WTC11 (cell line): ENCODE measurements at regions of chr11 and their contacts with region 1.

Region 1: DNA sequence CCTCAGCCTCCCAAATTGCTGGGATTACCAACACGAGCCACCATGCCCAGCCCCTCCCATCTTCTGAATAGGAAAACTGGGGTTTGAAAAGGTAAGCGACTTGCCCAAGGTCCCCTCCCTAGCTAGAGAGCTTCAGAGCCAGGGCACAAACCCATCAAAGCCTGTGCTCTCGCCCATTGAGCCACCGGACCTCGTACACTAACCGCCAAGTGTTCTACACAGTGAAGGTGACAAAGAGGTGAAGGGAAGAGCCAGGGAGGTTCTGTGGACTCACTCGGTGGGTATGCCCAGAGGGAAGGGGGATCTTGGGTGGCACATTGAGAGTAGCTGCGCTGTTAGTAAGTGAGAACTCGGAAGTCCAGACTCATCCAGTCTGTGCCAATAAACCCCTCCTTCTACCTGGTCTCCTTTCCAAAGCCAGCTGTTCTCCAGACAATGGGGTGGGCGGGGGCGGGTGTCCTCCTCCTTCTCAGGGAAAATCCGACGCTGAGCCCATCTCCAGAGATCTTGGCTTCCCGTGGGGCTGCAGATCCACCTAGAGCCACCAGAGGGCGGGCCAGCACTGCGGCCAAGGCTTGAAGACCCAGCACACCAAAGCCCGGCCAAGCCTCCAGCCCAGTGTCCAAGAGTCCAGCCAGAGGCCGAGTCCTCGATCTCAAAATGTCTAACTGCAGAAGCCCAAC is 3.2 kb upstream of the RTN4RL2 start:
- DNase-seq: peak; percentile 94
- ATAC-seq: peak; percentile 38
- H3K4me3 Mint-ChIP-seq: peak overlapping the region; percentile 80
- H3K27ac Mint-ChIP-seq: no peak overlapping the region
- H3K4me1 Mint-ChIP-seq: peaks cover 26% of the 10 kb centered on the region
- H3K27me3 Mint-ChIP-seq: peaks cover 62% of the 10 kb centered on the region
- CTCF ChIP-seq: peak; percentile 100

Region 2: GRCh38 chr11:57219021-57219627 is 238.0 kb before region 1 on chr11:
- CTCF ChIA-PET with region 1: no interaction called
- POLR2A ChIA-PET with region 1: no interaction called
- DNase-seq: no peak
- ATAC-seq: no peak
- H3K4me3 Mint-ChIP-seq: no peak overlapping the region
- H3K27ac Mint-ChIP-seq: no peak overlapping the region
- H3K4me1 Mint-ChIP-seq: peaks cover 2% of the 10 kb centered on the region; the same call in 1 of the 2 replicates
- H3K27me3 Mint-ChIP-seq: no peaks in the 10 kb centered on the region
- CTCF ChIP-seq: no peak

Region 3: DNA sequence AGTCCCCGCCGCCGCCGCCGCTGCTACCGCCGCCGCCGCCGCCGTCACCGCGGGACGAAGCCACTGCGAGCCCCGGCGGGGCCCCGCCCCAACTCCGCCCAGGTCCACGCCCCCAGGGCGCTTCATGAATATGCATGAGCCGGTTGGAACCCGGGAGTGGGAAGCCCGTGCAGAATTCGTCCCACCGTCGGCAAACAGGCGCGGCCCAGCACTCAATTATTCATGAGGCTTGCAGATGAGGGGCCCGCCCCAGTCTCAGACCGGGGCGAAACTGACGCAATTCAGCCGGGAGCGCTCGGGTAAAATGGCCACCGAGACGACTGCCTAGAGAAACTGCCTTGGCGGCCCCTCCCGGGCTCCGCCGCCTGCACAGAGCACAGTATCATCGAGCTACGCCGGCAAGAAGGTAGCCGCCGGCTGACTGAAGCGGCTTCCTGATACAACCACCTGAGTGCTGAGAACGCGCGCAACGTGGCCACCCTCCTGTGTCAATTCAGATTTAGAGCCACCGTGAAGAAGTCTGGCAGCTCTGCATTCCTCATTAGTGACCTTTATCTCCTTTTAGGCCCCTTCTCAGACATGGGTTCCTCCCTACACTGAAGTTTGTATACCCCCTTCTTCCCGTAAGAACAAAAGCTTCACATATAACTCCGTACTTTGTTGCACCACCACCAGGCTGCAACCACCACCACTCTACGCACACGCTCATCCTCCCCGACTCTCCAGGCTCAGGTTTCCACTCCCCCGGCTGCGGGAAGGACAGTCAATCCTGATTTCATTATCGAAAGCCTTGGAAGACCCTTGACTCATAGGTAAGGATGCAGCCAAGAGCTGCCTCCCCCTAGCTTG is 132.0 kb before region 1 on chr11 and contains the start of gene TNKS1BP1:
- CTCF ChIA-PET with region 1: interaction called, 16 read pairs
- POLR2A ChIA-PET with region 1: no interaction called
- DNase-seq: peak; percentile 97
- ATAC-seq: peak; percentile 86
- H3K4me3 Mint-ChIP-seq: peak within 1 kb of the TSS; percentile 88
- H3K27ac Mint-ChIP-seq: peak within 1 kb of the TSS; percentile 100
- H3K4me1 Mint-ChIP-seq: peaks cover 49% of the 10 kb centered on the region
- H3K27me3 Mint-ChIP-seq: no peaks in the 10 kb centered on the region
- CTCF ChIP-seq: no peak
- total RNA-seq, gene TNKS1BP1: 109 to 127 TPM (median 125 TPM) in 3 replicates

Region 4: GRCh38 chr11:57358543-57358961 is 98.5 kb before region 1 on chr11:
- CTCF ChIA-PET with region 1: interaction called, 15 read pairs
- POLR2A ChIA-PET with region 1: no interaction called
- DNase-seq: no peak
- ATAC-seq: no peak
- H3K4me3 Mint-ChIP-seq: no peak overlapping the region
- H3K27ac Mint-ChIP-seq: no peak overlapping the region
- H3K4me1 Mint-ChIP-seq: peaks cover 7% of the 10 kb centered on the region
- H3K27me3 Mint-ChIP-seq: peaks cover 11% of the 10 kb centered on the region; the same call in 1 of the 2 replicates
- CTCF ChIP-seq: no peak

Region 5: GRCh38 chr11:57426929-57427726 is 30.0 kb before region 1 on chr11 and contains the start of gene SLC43A3:
- CTCF ChIA-PET with region 1: interaction called, 36 read pairs
- POLR2A ChIA-PET with region 1: no interaction called
- DNase-seq: peak; percentile 73
- ATAC-seq: peak; percentile 92
- H3K4me3 Mint-ChIP-seq: peak within 1 kb of the TSS; percentile 72
- H3K27ac Mint-ChIP-seq: peak within 1 kb of the TSS; percentile 64; the same call in 1 of the 2 replicates
- H3K4me1 Mint-ChIP-seq: peaks cover 29% of the 10 kb centered on the region
- H3K27me3 Mint-ChIP-seq: peaks cover 38% of the 10 kb centered on the region
- CTCF ChIP-seq: no peak
- total RNA-seq, gene SLC43A3: 22.6 to 25.8 TPM (median 25.3 TPM) in 3 replicates

Region 6: DNA sequence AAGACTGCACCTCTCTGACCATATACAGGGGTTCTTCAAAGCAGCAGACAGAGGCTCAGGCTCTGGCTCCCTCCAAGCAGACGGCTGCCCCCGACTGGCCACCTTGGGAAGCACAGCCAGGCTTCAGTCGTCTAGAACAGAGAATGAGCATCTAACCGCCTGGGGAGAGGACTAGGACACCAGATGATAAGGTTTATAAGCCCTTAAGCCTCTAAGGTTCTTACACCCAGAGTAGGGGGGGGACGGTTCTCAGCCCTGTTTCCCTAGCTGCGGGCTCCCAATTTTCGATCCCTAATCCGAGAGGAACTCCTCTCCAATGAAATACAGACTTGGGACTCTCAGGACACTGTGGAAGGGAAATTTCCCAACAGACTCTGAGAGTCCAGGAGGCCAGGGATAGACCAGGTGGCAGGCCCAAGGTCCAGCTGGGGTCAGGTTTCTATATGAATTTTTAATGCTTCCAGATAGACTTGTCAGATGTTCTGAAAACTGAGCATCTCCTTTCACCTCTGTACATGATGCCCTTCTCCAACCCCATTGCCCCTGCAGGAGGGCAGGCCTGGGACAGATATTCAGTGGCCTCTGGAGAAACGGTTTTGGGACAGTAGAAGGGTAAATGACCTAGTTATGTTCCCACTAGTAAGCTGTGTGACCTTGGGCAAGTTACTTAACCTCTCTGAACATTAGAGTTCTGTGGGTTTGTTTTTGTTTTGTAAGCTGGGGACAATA is 23.5 kb after region 1 on chr11:
- CTCF ChIA-PET with region 1: interaction called, 260 read pairs
- POLR2A ChIA-PET with region 1: interaction called, 12 read pairs
- DNase-seq: peak; percentile 93
- ATAC-seq: peak; percentile 60
- H3K4me3 Mint-ChIP-seq: no peak overlapping the region
- H3K27ac Mint-ChIP-seq: 0 out of 2 replicates have a peak overlapping the region, but pooled peaks have one; percentile 14
- H3K4me1 Mint-ChIP-seq: peaks cover 56% of the 10 kb centered on the region
- H3K27me3 Mint-ChIP-seq: peaks cover 74% of the 10 kb centered on the region
- CTCF ChIP-seq: peak; percentile 73

Region 7: GRCh38 chr11:57523419-57523818 is 66.3 kb after region 1 on chr11:
- CTCF ChIA-PET with region 1: interaction called, 59 read pairs
- POLR2A ChIA-PET with region 1: interaction called, 5 read pairs
- DNase-seq: no peak
- ATAC-seq: no peak
- H3K4me3 Mint-ChIP-seq: no peak overlapping the region
- H3K27ac Mint-ChIP-seq: no peak overlapping the region
- H3K4me1 Mint-ChIP-seq: peaks cover 13% of the 10 kb centered on the region
- H3K27me3 Mint-ChIP-seq: no peaks in the 10 kb centered on the region
- CTCF ChIP-seq: no peak

Region 8: DNA sequence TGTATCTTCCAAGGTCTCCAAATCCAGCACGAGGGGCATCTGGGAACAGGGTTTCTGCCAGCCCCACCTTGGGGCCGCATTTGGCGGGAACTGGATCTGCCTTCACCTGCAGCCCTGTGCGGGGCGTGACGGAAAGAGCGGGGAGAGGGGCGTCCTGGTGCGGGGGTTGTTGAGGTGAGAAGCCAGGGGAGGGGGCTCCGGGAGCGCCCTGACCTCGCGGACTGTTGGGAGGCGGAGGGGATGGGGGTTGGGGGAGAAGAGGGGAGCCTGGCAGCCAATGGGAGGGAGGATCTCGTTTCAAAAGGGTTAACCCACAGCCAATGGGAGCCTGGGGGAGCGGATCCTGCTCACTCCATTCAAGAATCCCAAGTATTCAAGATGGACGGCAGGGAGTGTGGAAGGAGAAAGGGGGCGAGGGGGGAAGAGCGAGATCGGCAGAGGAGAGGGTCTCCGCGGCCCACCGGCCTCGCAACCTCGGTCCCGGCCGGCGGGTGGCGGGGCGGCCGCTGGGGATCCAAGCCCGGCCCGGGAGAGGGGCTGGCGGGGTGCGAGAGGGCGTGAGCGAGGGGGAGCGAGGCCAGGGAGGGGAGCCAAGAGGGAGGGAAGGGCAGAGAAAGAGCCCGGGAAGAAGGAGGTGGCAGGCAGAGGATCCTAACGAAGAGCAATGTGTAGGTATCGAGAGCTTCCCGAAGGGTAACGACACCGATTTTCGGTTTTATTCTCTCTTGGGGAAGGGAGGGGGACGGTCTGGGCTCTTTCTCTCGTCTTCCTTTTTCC is 181.1 kb after region 1 on chr11:
- CTCF ChIA-PET with region 1: interaction called, 23 read pairs
- POLR2A ChIA-PET with region 1: interaction called, 3 read pairs
- DNase-seq: peak; percentile 94
- ATAC-seq: peak; percentile 69
- H3K4me3 Mint-ChIP-seq: peak overlapping the region; percentile 96
- H3K27ac Mint-ChIP-seq: peak overlapping the region; percentile 99
- H3K4me1 Mint-ChIP-seq: peaks cover 48% of the 10 kb centered on the region
- H3K27me3 Mint-ChIP-seq: peaks cover 18% of the 10 kb centered on the region
- CTCF ChIP-seq: no peak